CD4-positive, alpha-beta T cell (primary cell): ENCODE measurements at regions of chr22 and their contacts with region 1.

Region 1: DNA sequence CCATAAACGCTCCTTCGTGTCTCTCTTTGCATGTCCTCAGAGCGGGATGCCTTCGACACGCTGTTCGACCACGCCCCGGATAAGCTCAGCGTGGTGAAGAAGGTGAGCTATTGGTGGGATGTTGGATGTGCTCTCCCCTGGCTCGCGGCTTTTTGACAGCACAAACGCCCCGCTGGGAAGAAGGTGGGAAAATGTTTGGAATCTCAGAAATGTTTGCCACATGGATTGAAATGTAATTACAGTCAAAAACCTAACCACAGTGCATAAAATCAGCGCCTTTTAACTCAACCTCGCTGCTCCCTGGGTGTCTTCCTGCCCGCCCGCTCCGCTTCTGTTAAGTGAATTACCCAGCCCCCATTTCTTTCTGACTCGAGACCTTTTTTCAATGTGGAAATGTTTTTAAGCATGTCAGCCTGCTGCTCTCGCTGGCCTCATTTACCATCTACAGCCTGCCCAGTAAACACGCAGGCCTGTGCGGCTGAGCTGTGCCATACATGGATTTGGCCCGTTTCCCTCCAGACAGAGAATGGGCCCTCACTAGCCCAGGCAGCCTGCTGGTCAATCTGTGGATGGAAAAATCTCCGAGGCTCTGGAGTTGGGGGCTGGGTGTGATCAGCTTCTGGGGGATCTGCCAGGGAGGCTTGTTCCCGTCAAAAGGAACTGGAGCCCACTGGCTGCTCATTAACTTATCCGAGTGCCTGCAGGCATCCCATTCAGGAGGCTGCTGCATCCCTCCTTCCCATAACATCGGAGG is 32.7 kb upstream of the PARVG start:
- DNase-seq: no peak
- ATAC-seq: no peak
- H3K4me3 ChIP-seq: no peak overlapping the region
- H3K4me3 Mint-ChIP-seq: no peak overlapping the region
- H3K27ac ChIP-seq: no peak overlapping the region
- H3K27ac Mint-ChIP-seq: no peak overlapping the region
- H3K4me1 ChIP-seq: no peaks in the 10 kb centered on the region
- H3K4me1 Mint-ChIP-seq: no peaks in the 10 kb centered on the region
- H3K27me3 ChIP-seq: no peaks in the 10 kb centered on the region
- H3K27me3 Mint-ChIP-seq: no peaks in the 10 kb centered on the region
- CTCF ChIP-seq: no peak

Region 2: DNA sequence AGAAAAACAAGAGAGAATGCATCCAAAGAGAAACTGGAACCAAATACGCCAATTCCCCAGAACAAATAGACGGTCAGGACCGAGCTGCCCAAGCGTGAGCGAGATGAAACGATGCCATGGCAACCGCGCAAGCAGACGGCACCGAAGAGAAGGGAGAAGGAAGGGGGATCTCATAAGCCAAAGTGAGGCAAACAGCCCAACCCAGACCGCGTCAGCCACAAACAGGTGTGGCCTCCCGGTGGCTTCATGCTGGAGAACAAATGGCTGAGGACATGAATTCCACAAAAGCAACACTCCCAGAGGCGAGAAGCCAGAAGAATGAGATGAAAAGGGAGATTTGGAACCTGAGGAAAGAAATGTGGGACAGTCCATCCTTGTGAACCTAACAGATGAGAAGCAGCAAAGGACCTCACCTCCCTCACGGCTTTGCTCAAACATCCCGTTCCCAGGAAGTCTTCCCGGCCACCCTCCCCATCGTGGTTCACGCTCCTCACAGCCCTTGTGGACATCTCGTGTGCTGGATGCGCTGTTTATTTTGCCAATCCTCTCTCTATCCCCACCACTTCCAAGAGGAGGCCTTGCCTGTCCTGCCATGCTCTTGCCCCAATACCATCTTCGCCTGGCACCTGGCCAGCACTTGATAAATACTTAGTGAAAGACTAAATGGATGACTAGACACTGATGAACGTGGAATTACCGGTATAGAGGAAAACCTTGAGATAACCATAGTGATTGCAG is 439.2 kb after region 1 on chr22:
- CTCF ChIA-PET with region 1: no interaction called
- POLR2A ChIA-PET with region 1: no interaction called
- intact Hi-C with region 1: loop called in 1 of 2 experiments (anchors 10 kb)
- DNase-seq: peak in 1 of 14 experiments; percentile 48
- ATAC-seq: no peak
- H3K4me3 ChIP-seq: no peak overlapping the region
- H3K4me3 Mint-ChIP-seq: no peak overlapping the region
- H3K27ac ChIP-seq: no peak overlapping the region
- H3K27ac Mint-ChIP-seq: no peak overlapping the region
- H3K4me1 ChIP-seq: peaks cover 12% of the 10 kb centered on the region
- H3K4me1 Mint-ChIP-seq: peaks cover 5% of the 10 kb centered on the region
- H3K27me3 ChIP-seq: peaks cover 0 to 18% of the 10 kb centered on the region in 2 experiments
- H3K27me3 Mint-ChIP-seq: peaks cover 45% of the 10 kb centered on the region
- CTCF ChIP-seq: no peak